Activated CD8-positive, alpha-beta T cell treated with anti-CD3 and anti-CD28 coated beads, Interleukin-2, amount 10 ng/mL, durations not matched to agents 7 days and 5 days (primary cell): ENCODE measurements at regions of chr6 and their contacts with region 1.

Region 1: DNA sequence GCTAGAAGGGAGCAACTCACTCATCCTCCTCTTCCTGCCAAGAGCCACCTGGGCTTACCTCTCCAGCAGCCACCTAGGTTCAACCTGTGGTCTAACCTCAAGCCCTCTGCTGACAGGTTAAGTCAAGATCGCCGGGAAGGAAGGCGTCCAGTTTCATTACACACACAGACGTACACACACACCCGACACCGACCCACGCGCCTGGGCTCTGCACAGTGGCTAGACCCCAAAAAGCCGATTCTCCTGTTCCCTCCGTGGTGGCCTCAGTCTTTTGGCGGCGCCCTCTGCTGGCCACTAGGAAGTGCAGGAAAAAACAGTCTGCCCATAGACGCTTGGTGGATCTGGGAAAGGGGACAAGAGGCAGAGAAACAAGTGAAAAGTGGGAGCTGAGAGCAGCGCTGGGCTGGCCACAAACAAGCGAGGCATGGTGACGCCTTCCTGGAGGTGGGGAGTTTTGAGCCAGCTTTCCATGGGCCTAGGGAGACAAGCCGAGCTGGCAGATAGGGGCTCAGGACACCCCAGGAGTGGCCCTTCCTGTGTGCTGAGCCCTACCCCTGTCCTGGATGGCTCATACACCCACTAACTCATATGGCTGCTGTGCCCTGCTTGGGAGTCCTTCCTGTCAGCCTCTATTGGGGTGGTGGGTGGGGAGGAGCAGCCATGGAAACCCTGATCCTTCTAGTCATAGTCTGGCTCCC is 52.7 kb downstream of the MRPL14 start:
- DNase-seq: peak; percentile 86
- ATAC-seq: peak; percentile 72
- H3K4me3 Mint-ChIP-seq: peak overlapping the region; percentile 93
- H3K27ac Mint-ChIP-seq: peak overlapping the region; percentile 73
- H3K4me1 Mint-ChIP-seq: peaks cover 25% of the 10 kb centered on the region
- H3K27me3 Mint-ChIP-seq: peaks cover 19% of the 10 kb centered on the region

Region 2: DNA sequence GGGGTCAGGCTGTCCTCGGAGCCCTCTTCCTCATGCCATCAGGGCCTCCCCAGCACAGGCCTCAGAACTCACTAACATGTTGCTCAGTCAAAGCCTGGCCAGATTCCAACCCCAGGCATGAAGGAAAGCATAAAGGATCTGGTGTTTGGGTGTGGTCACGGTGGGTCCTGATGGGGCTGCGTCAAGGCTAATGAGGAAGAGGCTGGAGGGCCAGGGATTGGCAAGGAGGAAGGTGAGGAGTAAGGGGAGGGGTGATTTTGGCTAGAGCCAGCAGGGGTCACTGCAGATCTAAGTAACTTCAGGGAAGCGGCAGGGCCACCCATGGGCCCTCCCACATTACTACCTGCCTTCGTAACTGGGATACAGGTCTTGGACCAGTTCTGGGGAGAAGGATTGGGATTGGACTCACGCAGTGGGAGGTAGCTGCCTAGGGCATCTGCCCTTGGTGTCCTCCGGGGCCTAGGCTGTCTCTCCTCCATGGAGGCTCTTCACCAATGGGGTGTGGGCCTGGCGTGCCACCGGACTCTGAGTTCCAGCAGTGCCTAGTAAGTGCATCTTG is 350.8 kb before region 1 on chr6:
- CTCF ChIA-PET with region 1: interaction called, 38 read pairs
- POLR2A ChIA-PET with region 1: interaction called, 4 read pairs
- DNase-seq: peak; percentile 83
- ATAC-seq: peak; percentile 83
- H3K4me3 Mint-ChIP-seq: no peak overlapping the region
- H3K27ac Mint-ChIP-seq: no peak overlapping the region
- H3K4me1 Mint-ChIP-seq: peaks cover 30% of the 10 kb centered on the region
- H3K27me3 Mint-ChIP-seq: peaks cover 18% of the 10 kb centered on the region

Region 3: GRCh38 chr6:43758617-43759050 is 316.0 kb before region 1 on chr6:
- CTCF ChIA-PET with region 1: interaction called, 20 read pairs
- POLR2A ChIA-PET with region 1: interaction called, 3 read pairs
- DNase-seq: no peak
- ATAC-seq: peak; percentile 54
- H3K4me3 Mint-ChIP-seq: no peak overlapping the region
- H3K27ac Mint-ChIP-seq: no peak overlapping the region
- H3K4me1 Mint-ChIP-seq: no peaks in the 10 kb centered on the region
- H3K27me3 Mint-ChIP-seq: peaks cover 22% of the 10 kb centered on the region

Region 4: DNA sequence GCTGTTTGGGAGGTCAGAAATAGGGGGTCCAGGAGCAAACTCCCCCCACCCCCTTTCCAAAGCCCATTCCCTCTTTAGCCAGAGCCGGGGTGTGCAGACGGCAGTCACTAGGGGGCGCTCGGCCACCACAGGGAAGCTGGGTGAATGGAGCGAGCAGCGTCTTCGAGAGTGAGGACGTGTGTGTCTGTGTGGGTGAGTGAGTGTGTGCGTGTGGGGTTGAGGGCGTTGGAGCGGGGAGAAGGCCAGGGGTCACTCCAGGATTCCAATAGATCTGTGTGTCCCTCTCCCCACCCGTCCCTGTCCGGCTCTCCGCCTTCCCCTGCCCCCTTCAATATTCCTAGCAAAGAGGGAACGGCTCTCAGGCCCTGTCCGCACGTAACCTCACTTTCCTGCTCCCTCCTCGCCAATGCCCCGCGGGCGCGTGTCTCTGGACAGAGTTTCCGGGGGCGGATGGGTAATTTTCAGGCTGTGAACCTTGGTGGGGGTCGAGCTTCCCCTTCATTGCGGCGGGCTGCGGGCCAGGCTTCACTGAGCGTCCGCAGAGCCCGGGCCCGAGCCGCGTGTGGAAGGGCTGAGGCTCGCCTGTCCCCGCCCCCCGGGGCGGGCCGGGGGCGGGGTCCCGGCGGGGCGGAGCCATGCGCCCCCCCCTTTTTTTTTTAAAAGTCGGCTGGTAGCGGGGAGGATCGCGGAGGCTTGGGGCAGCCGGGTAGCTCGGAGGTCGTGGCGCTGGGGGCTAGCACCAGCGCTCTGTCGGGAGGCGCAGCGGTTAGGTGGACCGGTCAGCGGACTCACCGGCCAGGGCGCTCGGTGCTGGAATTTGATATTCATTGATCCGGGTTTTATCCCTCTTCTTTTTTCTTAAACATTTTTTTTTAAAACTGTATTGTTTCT is 304.8 kb before region 1 on chr6 and contains the start of gene VEGFA:
- CTCF ChIA-PET with region 1: interaction called, 92 read pairs
- POLR2A ChIA-PET with region 1: interaction called, 4 read pairs
- DNase-seq: peak; percentile 92
- ATAC-seq: peak; percentile 73
- H3K4me3 Mint-ChIP-seq: peak within 1 kb of the TSS; percentile 97
- H3K27ac Mint-ChIP-seq: peak within 1 kb of the TSS; percentile 85
- H3K4me1 Mint-ChIP-seq: peaks cover 38% of the 10 kb centered on the region
- H3K27me3 Mint-ChIP-seq: peaks cover 9% of the 10 kb centered on the region
- total RNA-seq, gene VEGFA: 37.9 to 39.3 TPM

Region 5: GRCh38 chr6:43774776-43775534 is 299.6 kb before region 1 on chr6:
- CTCF ChIA-PET with region 1: interaction called, 92 read pairs
- POLR2A ChIA-PET with region 1: interaction called, 4 read pairs
- DNase-seq: peak; percentile 75
- ATAC-seq: no peak
- H3K4me3 Mint-ChIP-seq: no peak overlapping the region
- H3K27ac Mint-ChIP-seq: no peak overlapping the region
- H3K4me1 Mint-ChIP-seq: peaks cover 50% of the 10 kb centered on the region
- H3K27me3 Mint-ChIP-seq: no peaks in the 10 kb centered on the region

Region 6: GRCh38 chr6:44064089-44064947 is 10.3 kb before region 1 on chr6:
- CTCF ChIA-PET with region 1: interaction called, 39 read pairs
- POLR2A ChIA-PET with region 1: interaction called, 3 read pairs
- DNase-seq: no peak
- ATAC-seq: peak; percentile 47
- H3K4me3 Mint-ChIP-seq: no peak overlapping the region
- H3K27ac Mint-ChIP-seq: peak overlapping the region; percentile 5
- H3K4me1 Mint-ChIP-seq: peaks cover 17% of the 10 kb centered on the region
- H3K27me3 Mint-ChIP-seq: peaks cover 3% of the 10 kb centered on the region

Region 7: GRCh38 chr6:44327096-44327495 is 252.5 kb after region 1 on chr6:
- CTCF ChIA-PET with region 1: no interaction called
- POLR2A ChIA-PET with region 1: no interaction called
- DNase-seq: no peak
- ATAC-seq: no peak
- H3K4me3 Mint-ChIP-seq: no peak overlapping the region
- H3K27ac Mint-ChIP-seq: no peak overlapping the region
- H3K4me1 Mint-ChIP-seq: no peaks in the 10 kb centered on the region
- H3K27me3 Mint-ChIP-seq: peaks cover 32% of the 10 kb centered on the region